ENCODE measurements at regions of chr13 and their contacts with region 1.

Region 1: DNA sequence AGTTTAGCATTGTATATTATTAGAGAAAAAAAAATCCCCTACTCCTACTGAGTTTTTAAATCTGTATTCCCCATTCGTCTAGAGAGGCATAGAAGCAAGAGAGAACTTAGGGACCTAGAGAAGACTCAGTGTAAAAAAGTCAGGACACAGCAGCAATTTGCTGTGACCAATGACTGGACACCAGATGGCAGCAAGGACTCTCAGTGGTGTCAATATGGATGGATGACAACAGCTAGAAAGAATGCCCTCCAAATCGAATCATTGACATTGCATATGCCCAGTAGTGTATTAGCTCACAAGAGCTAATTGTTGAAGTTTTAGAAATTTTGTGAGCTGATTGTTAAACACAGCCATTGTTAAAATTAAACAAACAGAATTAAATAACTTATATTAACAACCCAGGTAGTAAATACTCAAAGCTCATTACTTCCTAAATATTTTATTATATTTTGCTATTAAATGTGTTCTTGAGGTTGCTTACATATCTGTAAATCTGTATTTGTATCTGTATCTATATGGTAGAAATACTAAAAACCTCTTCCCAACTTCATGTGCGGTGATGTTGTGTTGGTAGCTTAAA is 43.9 kb downstream of the SIAH3 start:
- DNase-seq: peak in 3 of 9 donors; percentile 16 to 23 (median 20)
- ATAC-seq: peak; percentile 48
- H3K4me3 ChIP-seq: no peak overlapping the region
- H3K4me3 Mint-ChIP-seq: no peak overlapping the region
- H3K27ac ChIP-seq: no peak overlapping the region
- H3K27ac Mint-ChIP-seq: no peak overlapping the region
- H3K4me1 ChIP-seq: no peaks in the 10 kb centered on the region
- H3K4me1 Mint-ChIP-seq: peaks cover 0 to 12% (median 4%) of the 10 kb centered on the region in 7 donors
- H3K27me3 ChIP-seq: no peaks in the 10 kb centered on the region
- H3K27me3 Mint-ChIP-seq: no peaks in the 10 kb centered on the region

Region 2: DNA sequence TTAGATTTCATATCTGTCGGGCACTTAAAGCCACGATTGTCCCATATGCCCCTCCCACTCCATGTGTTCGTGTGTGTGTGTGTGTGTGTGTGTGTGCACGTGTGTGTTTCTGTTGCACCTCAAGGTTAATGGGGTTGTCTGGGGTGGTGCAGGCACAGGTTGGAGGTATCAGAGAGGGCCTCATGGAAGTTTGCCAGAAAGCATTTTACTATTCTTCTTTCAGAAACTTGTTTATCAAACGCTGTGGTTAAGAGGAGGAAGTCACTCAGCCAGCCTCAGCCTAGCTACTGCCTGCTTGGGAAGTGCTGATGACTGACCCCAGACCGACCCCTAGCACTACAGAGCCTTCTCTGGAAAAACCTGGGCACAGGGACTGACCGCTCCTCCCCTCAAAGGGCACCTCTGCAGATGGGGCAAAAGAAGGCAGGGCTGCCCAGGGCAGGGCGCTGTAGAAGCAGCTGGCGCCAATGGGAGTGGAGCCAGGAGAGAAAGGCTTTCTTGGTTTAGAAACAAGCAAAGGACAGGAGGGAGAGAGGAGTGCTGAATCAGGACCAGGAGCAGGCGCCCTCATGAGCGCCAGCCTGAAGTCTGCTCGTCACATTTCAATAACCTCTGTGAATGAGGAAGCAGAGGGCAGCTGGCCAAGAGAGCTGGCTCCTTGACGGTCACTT is 40.1 kb after region 1 on chr13:
- CTCF ChIA-PET with region 1: interaction called, 5 read pairs
- POLR2A ChIA-PET with region 1: interaction called, 3 read pairs
- intact Hi-C with region 1: loop called (anchors 5 kb)
- DNase-seq: peak; percentile 15 to 83 (median 78)
- ATAC-seq: peak; percentile 79
- H3K4me3 ChIP-seq: peak overlapping the region; percentile 11
- H3K4me3 Mint-ChIP-seq: peak overlapping the region; percentile 61 to 89 (median 76)
- H3K27ac ChIP-seq: peak overlapping the region; percentile 19
- H3K27ac Mint-ChIP-seq: peak overlapping the region; percentile 14 to 98 (median 90)
- H3K4me1 ChIP-seq: peaks cover 29 to 45% of the 10 kb centered on the region in 2 donors
- H3K4me1 Mint-ChIP-seq: peaks cover 38 to 66% (median 61%) of the 10 kb centered on the region in 7 donors
- H3K27me3 ChIP-seq: no peaks in the 10 kb centered on the region
- H3K27me3 Mint-ChIP-seq: peaks cover 0 to 48% (median 5%) of the 10 kb centered on the region in 5 donors

Region 3: GRCh38 chr13:45879670-45880069 is 72.1 kb after region 1 on chr13:
- CTCF ChIA-PET with region 1: interaction called, 6 read pairs
- POLR2A ChIA-PET with region 1: no interaction called
- intact Hi-C with region 1: loop called in 1 of 2 experiments (anchors 1 kb)
- DNase-seq: peak in 3 of 9 donors; percentile 2 to 21 (median 3)
- ATAC-seq: no peak
- H3K4me3 ChIP-seq: no peak overlapping the region
- H3K4me3 Mint-ChIP-seq: no peak overlapping the region
- H3K27ac ChIP-seq: no peak overlapping the region
- H3K27ac Mint-ChIP-seq: no peak overlapping the region
- H3K4me1 ChIP-seq: no peaks in the 10 kb centered on the region
- H3K4me1 Mint-ChIP-seq: no peaks in the 10 kb centered on the region
- H3K27me3 ChIP-seq: no peaks in the 10 kb centered on the region
- H3K27me3 Mint-ChIP-seq: peaks cover 0 to 21% (median 7%) of the 10 kb centered on the region in 5 donors

Region 4: DNA sequence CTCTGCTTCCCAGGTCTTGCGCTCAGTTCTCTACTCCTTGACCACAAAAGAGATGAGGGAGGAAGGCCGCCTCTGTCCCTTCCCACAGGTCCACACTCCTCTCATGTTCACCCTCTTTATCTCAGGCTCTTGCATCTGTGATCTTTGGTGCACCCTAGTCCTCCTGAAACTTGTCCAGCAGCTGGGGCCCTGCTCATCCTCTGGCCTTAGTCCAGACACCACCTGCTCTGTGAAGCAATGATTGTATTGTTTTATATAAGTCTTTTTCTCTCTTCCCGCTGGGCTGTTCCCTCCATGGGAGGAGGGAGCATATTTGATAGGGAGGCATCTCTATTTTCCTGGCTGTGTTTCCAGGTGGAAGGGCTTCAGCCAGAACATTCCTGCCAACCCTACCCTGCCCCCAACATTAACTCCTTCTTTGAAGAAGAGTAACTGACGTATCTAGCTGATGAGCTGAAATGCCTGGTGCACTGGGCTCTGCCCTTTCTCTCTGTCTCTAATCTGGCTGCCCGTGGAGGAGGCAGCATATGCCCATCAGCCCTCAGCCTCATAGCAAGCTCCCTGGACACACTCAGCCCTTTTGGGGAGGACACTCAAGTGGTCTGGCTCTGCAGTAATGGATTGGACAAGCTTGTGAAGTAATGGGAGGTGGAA is 82.1 kb after region 1 on chr13:
- CTCF ChIA-PET with region 1: no interaction called
- POLR2A ChIA-PET with region 1: no interaction called
- intact Hi-C with region 1: loop called in 1 of 2 experiments (anchors 5 kb)
- DNase-seq: no peak
- ATAC-seq: no peak
- H3K4me3 ChIP-seq: no peak overlapping the region
- H3K4me3 Mint-ChIP-seq: no peak overlapping the region
- H3K27ac ChIP-seq: no peak overlapping the region
- H3K27ac Mint-ChIP-seq: no peak overlapping the region
- H3K4me1 ChIP-seq: no peaks in the 10 kb centered on the region
- H3K4me1 Mint-ChIP-seq: peaks cover 0 to 3% (median 0%) of the 10 kb centered on the region in 7 donors
- H3K27me3 ChIP-seq: peaks cover 0 to 1% of the 10 kb centered on the region in 2 donors
- H3K27me3 Mint-ChIP-seq: peaks cover 0 to 13% (median 4%) of the 10 kb centered on the region in 5 donors

Region 5: DNA sequence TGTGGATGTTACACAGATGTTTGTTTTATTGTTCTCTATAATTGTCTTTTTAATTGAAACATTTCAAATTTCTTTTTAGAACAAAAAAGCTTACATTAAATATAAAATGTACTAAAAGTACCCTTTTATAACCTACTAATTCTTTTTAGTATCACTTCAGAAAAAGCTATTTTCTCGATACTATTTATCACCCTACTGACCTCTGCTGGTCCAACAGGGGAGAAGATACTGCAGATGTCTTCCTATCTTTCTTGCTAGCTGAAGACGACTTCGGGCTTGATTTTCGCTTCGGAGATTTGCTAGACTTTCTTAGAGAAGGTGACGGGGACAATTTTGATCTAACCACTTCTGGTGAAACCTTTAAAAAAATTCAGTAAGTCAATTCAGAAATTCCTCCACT is 202.5 kb after region 1 on chr13:
- CTCF ChIA-PET with region 1: no interaction called
- POLR2A ChIA-PET with region 1: no interaction called
- intact Hi-C with region 1: loop called in 1 of 2 experiments (anchors 1 kb)
- DNase-seq: peak in 1 of 9 donors; percentile 3
- ATAC-seq: no peak
- H3K4me3 ChIP-seq: no peak overlapping the region
- H3K4me3 Mint-ChIP-seq: no peak overlapping the region
- H3K27ac ChIP-seq: no peak overlapping the region
- H3K27ac Mint-ChIP-seq: no peak overlapping the region
- H3K4me1 ChIP-seq: no peaks in the 10 kb centered on the region
- H3K4me1 Mint-ChIP-seq: peaks cover 0 to 16% (median 0%) of the 10 kb centered on the region in 7 donors
- H3K27me3 ChIP-seq: no peaks in the 10 kb centered on the region
- H3K27me3 Mint-ChIP-seq: no peaks in the 10 kb centered on the region

Region 6: GRCh38 chr13:46022481-46022880 is 214.9 kb after region 1 on chr13:
- CTCF ChIA-PET with region 1: no interaction called
- POLR2A ChIA-PET with region 1: no interaction called
- intact Hi-C with region 1: no loop called
- DNase-seq: no peak
- ATAC-seq: no peak
- H3K4me3 ChIP-seq: no peak overlapping the region
- H3K4me3 Mint-ChIP-seq: no peak overlapping the region
- H3K27ac ChIP-seq: no peak overlapping the region
- H3K27ac Mint-ChIP-seq: no peak overlapping the region
- H3K4me1 ChIP-seq: no peaks in the 10 kb centered on the region
- H3K4me1 Mint-ChIP-seq: peaks cover 2 to 24% (median 9%) of the 10 kb centered on the region in 7 donors
- H3K27me3 ChIP-seq: no peaks in the 10 kb centered on the region
- H3K27me3 Mint-ChIP-seq: no peaks in the 10 kb centered on the region

Measured in naive thymus-derived CD4-positive, alpha-beta T cell (primary cell).